Right cardiac atrium (tissue), 5 donors: ENCODE measurements at regions of chr18 and their contacts with region 1.

Region 1: GRCh38 chr18:2906704-2907549 is 60.1 kb downstream of the EMILIN2 start:
- DNase-seq: peak; percentile 33 to 75 (median 72)
- ATAC-seq: peak; percentile 25 to 49
- H3K4me3 ChIP-seq: peak overlapping the region; percentile 50
- H3K27ac ChIP-seq: no peak overlapping the region
- H3K4me1 ChIP-seq: no peaks in the 10 kb centered on the region
- H3K27me3 ChIP-seq: no peaks in the 10 kb centered on the region

Region 2: GRCh38 chr18:2805970-2806943 is 100.7 kb before region 1 on chr18:
- intact Hi-C with region 1: loop called in 1 of 4 experiments (anchors 10 kb)
- DNase-seq: no peak
- ATAC-seq: no peak
- H3K4me3 ChIP-seq: no peak overlapping the region
- H3K27ac ChIP-seq: no peak overlapping the region
- H3K4me1 ChIP-seq: no peaks in the 10 kb centered on the region
- H3K27me3 ChIP-seq: no peaks in the 10 kb centered on the region

Region 3: DNA sequence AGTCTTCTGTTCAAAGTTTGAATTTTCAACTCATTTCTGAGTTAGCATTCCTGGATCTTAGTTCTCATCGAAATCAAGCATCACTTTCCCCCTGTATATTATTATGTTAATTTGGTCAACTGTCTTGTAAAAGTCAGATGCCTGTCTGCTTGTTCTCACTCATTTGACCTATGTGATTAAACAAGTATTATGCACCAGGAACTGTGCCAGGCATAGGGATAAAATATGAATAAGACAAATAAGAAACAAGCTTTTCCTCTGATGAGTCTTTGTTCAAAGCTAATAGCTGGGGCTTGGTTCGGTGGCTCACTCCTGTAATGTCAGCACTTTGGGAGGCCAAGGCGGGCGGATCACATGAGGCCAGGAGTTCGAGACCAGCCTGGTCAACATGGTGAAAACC is 79.9 kb before region 1 on chr18:
- intact Hi-C with region 1: no loop called
- DNase-seq: no peak
- ATAC-seq: no peak
- H3K4me3 ChIP-seq: no peak overlapping the region
- H3K27ac ChIP-seq: no peak overlapping the region
- H3K4me1 ChIP-seq: peaks cover 2% of the 10 kb centered on the region
- H3K27me3 ChIP-seq: no peaks in the 10 kb centered on the region